ENCODE measurements at regions of chr12 and their contacts with region 1.

Region 1: DNA sequence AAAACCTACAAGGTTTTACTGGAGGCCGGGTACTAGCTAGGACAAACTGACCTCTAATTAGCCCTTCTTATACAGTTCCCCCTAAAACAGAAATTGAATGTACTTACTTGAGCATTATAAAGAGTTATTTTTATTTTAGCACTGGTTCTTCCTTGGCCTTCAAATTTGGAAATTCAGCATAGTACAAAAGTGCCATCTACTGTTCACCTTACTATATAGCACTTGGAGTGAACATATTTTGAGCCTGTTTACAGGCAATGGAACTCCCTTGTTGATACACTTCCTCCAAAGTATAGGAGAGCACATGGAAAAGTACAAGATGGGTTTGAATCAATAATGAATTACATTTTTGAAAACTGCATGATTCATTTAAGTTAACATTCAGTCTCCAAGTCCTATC is 3.9 kb upstream of the POC1B start:
- H3K4me3 Mint-ChIP-seq: no peak overlapping the region
- H3K27ac Mint-ChIP-seq: no peak overlapping the region
- H3K4me1 Mint-ChIP-seq: peaks cover 16% of the 10 kb centered on the region
- H3K27me3 Mint-ChIP-seq: no peaks in the 10 kb centered on the region

Region 2: GRCh38 chr12:89019408-89020120 is 510.2 kb before region 1 on chr12:
- intact Hi-C with region 1: loop called (anchors 1 kb)
- H3K4me3 Mint-ChIP-seq: no peak overlapping the region
- H3K27ac Mint-ChIP-seq: no peak overlapping the region
- H3K4me1 Mint-ChIP-seq: no peaks in the 10 kb centered on the region
- H3K27me3 Mint-ChIP-seq: peaks cover 2% of the 10 kb centered on the region

Measured in dendritic cell treated with granulocyte-macrophage colony-stimulating factor and Interleukin-4, amounts not matched to agents 40 ng/mL and 50 ng/mL, for 4 days (primary cell).